ENCODE measurements at regions of chr10 and their contacts with region 1.

Region 1: DNA sequence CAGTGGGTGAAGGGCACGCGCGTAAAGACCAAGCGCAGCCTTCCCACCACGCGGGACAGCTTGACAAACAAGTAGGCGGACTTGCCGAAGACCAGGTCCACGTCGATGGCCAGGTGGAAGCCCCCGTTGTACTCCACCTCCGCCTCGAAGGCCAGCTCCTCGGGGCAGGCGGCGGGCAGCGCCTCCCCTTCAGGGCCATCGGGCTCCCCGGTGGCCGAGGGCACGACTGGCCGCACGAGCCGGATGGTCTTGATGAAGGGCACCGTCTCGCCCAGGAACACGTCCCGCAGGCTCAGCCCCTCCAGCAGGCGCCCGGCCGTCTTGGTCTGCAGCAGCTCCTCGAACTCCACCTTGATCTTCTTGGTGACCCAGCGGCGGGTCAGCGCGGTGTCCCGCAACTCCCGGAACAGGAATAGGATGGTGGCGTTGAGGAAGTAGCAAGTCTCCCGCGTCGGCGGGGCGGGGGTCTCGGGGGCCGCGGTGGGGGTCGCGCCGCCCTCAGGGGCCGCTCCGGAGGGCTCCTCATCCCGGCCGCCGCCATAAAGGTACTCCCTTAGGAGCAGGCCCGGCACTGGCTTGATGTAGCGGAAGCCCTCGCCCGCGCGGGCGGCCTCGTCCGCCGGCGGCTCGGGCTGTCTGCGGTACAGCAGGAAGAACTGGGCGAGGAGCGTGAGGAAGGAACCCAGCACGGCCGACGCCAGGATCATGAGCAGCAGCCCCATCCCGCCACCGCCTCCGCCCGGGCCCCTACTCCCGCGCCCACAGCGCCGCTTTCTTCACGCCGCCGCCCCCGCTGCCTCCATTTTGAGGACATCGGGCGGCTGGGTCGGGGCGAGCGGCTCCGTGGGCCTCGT is 507 bp downstream of the PDZD8 start:
- DNase-seq: peak; percentile 19
- ATAC-seq: peak; percentile 18
- H3K4me3 ChIP-seq: peak overlapping the region; percentile 98
- H3K27ac ChIP-seq: peak overlapping the region; percentile 6; the same call in 1 of the 2 replicates
- H3K4me1 ChIP-seq: peaks cover 15% of the 10 kb centered on the region
- H3K27me3 ChIP-seq: no peaks in the 10 kb centered on the region
- CTCF ChIP-seq: no peak

Region 2: GRCh38 chr10:117071286-117072050 is 303.3 kb before region 1 on chr10:
- CTCF ChIA-PET with region 1: no interaction called
- POLR2A ChIA-PET with region 1: no interaction called
- intact Hi-C with region 1: no loop called
- DNase-seq: no peak
- ATAC-seq: no peak
- H3K4me3 ChIP-seq: no peak overlapping the region
- H3K27ac ChIP-seq: no peak overlapping the region
- H3K4me1 ChIP-seq: peaks cover 5% of the 10 kb centered on the region; the same call in 1 of the 2 replicates
- H3K27me3 ChIP-seq: no peaks in the 10 kb centered on the region
- CTCF ChIP-seq: no peak

Region 3: GRCh38 chr10:117320050-117320665 is 54.6 kb before region 1 on chr10:
- CTCF ChIA-PET with region 1: no interaction called
- POLR2A ChIA-PET with region 1: interaction called, 4 read pairs
- intact Hi-C with region 1: loop called (anchors 2 kb)
- DNase-seq: peak; percentile 42
- ATAC-seq: peak; percentile 37; the same call in 1 of the 2 replicates
- H3K4me3 ChIP-seq: no peak overlapping the region
- H3K27ac ChIP-seq: no peak overlapping the region
- H3K4me1 ChIP-seq: 0 out of 2 replicates have a peak, but pooled peaks cover 4% of the 10 kb centered on the region
- H3K27me3 ChIP-seq: no peaks in the 10 kb centered on the region
- CTCF ChIP-seq: peak; percentile 74

Region 4: GRCh38 chr10:117360016-117360415 is 14.7 kb before region 1 on chr10:
- CTCF ChIA-PET with region 1: interaction called, 5 read pairs
- POLR2A ChIA-PET with region 1: interaction called, 15 read pairs
- intact Hi-C with region 1: no loop called
- DNase-seq: peak; percentile 44
- ATAC-seq: peak; percentile 46
- H3K4me3 ChIP-seq: no peak overlapping the region
- H3K27ac ChIP-seq: 0 out of 2 replicates have a peak overlapping the region, but pooled peaks have one; percentile 16
- H3K4me1 ChIP-seq: peaks cover 56% of the 10 kb centered on the region
- H3K27me3 ChIP-seq: no peaks in the 10 kb centered on the region
- CTCF ChIP-seq: no peak

Region 5: GRCh38 chr10:117461766-117462423 is 87.2 kb after region 1 on chr10:
- CTCF ChIA-PET with region 1: no interaction called
- POLR2A ChIA-PET with region 1: no interaction called
- intact Hi-C with region 1: loop called (anchors 5 kb)
- DNase-seq: peak; percentile 91
- ATAC-seq: peak; percentile 95
- H3K4me3 ChIP-seq: no peak overlapping the region
- H3K27ac ChIP-seq: peak overlapping the region; percentile 90
- H3K4me1 ChIP-seq: peaks cover 31% of the 10 kb centered on the region
- H3K27me3 ChIP-seq: no peaks in the 10 kb centered on the region
- CTCF ChIP-seq: no peak

Measured in PC-3 (cell line).